Posterior vena cava (tissue), 2 donors: ENCODE measurements at regions of chr10 and their contacts with region 1.

Region 1: DNA sequence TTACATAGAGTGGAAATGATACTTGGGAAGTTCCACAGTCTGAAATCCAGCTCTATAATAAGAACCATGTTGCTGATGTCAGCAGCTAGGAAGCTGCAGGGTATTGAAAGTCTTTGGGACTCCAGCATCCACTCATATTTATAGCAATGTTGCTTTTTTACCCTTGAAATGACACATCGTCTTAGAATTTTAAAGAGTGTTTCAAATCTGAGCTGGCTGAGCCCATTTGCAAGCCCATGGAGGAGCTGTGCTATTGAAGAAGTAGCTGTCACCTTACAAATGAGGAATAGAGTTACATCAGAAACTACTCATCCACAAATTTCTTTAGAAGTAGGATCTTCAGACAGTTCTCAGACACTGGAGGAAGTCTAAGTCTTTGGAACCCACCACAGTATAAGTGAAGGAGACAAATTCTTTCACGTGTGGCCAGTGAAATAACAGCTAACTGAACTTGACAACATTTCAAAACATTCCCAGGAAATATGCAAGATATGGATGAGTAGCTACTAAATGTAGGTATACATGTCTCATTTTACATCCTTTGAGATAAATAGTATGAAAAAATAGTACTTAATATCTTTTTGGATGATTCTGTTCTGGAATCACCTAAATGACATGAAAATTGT is 203.6 kb downstream of the ZNF365 start:
- DNase-seq: no peak

Region 2: DNA sequence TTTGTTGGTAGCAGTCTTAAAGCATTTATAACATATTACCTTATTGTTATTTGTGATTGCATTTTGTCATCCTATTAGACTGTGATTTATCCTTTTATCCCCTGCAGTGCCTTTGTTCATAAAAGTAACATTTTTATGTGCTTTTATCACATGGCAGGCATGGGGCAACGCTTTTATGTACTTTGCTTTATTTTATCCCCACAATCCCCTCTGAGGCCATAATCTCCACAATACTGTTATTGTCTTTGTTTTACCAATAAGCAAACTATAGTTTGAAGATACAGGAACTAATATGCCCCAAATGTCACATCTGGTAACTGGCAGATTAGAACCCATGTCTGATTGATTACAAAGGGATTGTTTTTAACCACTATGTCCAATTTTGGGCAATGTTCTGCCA is 1556.9 kb after region 1 on chr10:
- intact Hi-C with region 1: loop called in 1 of 2 experiments (anchors 5 kb)
- DNase-seq: no peak